Sciatic nerve (tissue), 2 donors: ENCODE measurements at regions of chr6 and their contacts with region 1.

Region 1: DNA sequence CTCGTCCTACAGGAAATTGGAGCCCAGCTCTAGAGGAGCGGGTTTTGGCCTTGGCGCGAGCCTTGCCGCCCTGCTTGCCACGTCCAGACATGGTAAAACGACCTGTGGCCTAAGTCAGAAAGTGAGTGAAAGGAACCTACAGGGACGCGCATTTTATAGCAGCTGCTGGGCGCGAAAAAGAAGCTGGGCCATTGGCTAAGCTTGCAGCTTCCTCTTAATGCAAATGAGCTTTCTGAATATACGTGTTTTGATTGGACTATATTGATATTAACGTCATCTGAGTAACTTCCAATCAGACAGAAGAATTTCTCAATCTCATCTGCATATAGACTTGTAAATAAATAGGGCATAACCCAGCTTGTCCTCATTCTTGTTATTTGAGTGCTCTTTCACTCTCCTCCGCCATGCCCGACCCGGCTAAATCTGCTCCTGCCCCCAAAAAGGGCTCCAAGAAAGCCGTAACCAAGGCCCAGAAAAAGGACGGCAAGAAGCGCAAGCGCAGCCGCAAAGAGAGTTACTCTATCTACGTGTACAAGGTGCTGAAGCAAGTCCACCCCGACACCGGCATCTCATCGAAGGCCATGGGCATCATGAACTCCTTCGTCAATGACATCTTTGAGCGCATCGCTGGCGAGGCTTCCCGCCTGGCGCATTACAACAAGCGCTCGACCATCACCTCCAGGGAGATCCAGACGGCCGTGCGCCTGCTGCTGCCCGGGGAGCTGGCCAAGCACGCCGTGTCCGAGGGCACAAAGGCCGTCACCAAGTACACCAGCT is 18.9 kb downstream of the OR2B2 start:
- DNase-seq: peak; percentile 80
- ATAC-seq: peak; percentile 65

Region 2: DNA sequence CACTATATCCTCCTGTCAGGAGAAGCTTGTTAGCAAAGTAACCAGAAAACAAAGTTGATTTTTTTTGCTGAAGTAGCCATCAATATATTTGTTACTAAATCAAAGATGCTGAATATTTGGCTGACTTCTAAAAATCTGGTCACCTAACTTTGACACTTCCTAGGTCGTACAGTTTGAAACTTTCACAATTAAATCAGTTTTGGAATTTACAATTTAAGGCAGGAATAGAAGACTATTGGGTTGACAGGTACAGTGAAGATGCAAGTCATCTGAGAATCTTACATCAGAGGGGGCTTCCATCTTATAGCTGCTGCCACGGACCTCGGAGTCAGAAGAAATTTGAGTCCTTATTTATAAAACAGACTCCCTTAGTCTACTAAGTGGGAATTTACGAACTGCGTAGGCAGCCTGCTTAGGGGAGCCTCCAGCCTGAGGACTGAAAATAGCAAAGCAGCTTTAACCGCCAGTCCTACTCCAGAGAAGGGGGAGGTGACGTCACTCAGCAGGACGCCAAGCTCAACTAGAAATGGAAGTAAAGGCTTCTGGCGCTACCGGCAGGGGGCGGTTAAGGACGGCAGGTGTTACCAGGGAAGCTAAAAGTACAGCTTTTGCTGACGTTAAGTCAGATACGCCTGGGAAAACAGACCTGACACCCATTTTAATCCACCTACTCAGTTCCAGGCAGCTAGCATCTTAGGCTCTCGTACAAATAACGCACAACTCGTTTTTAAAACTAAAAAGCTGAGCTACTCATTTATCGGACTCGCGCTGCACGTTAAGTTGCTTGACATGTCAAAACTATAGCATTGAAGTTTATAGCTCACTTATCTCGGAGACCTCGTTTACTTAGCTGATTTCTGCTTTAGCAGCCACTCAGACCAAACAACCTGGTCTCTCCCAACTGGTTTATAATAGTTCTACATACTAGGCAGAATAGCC is 1867.1 kb before region 1 on chr6:
- intact Hi-C with region 1: no loop called
- DNase-seq: peak; percentile 96
- ATAC-seq: peak; percentile 77

Region 3: DNA sequence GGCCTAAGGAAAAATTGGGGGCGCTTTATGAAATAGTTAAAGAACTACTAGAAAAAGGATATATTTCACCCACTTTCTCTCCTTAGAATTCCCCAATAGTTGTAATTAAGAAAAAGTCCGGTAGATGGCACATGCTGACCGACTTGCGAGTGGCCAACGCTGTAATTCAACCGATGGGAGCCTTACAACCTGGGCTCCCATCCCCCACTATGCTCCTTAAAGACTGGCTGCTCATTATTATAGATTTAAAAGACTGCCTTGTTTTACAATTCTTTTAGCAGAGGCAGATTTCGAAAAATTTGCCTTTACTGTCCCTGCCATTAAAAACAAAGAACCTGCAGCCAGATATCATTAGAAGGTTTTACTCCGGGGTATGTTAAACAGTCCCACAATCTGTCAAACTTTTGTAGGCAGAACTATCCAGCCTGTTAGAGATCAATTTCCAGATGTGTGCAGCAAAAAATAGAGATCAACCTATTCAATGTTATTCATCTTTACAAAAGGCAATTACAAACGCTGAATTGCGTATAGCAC is 704.3 kb before region 1 on chr6:
- intact Hi-C with region 1: loop called (anchors 10 kb)
- DNase-seq: no peak
- ATAC-seq: peak; percentile 95

Region 4: GRCh38 chr6:27871924-27872638 is 21.2 kb before region 1 on chr6:
- intact Hi-C with region 1: no loop called
- DNase-seq: peak; percentile 75
- ATAC-seq: peak; percentile 91